HepG2 (cell line): ENCODE measurements at regions of chr1 and their contacts with region 1.

Region 1: GRCh38 chr1:228734881-228735801 is at the start of gene RHOU:
- DNase-seq: peak; percentile 20
- ATAC-seq: peak; percentile 90
- H3K4me3 ChIP-seq: peak within 1 kb of the TSS; percentile 85 to 94 (median 86)
- H3K27ac ChIP-seq: peak within 1 kb of the TSS; percentile 61
- H3K4me1 ChIP-seq: peaks cover 39% of the 10 kb centered on the region
- H3K27me3 ChIP-seq: peaks cover 2 to 12% of the 10 kb centered on the region in 2 experiments; a peak in 4 of 5 replicates
- CTCF ChIP-seq: peak; percentile 67
- EP300 ChIP-seq: 0 out of 4 replicates have a peak, but pooled peaks of 1 of the 2 experiments have one; percentile 16
- POLR2A ChIP-seq: peak; percentile 59 to 65
- RAD21 ChIP-seq: peak; percentile 95
- total RNA-seq, gene RHOU: 18.5 and 23.6 TPM in 2 replicates

Region 2: DNA sequence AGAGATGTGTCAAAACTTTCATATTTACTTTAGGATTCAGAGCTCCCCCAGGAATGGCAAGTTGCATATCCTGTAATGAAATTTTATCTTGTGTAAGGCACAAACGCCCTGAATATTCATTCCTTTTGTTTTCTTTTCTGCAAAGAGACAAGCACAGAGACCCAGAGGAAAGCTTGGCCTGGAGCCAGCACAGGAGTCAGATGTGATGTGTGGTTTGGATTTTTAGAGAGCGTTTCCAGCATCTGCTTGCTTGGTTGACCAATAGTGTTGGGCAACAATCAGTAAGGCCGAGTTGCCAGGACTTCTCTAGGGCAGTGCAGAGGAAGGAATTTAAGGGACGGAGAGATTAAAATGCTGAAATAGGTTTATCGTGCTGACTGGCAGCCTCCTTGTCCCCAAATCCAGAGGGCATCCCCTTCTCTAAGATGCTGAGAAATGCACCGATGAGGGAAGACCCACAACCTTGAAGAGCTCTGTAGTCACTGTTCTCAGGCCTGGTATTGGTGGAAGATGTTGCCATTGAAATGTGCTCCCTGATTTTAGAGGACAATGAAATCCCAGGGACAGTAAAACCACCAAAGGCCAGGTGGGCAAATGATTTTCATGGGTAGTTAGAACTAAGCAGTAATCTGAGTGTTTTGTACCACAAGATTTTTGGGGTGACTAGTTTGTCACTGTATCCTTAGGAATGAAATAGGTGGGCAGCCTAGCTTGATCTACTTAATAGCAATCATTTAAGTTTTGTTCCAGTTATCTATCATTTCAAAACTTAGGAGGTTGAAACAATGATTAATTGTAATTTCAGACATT is 37.7 kb before region 1 on chr1:
- CTCF ChIA-PET with region 1: no interaction called
- POLR2A ChIA-PET with region 1: no interaction called
- in situ Hi-C with region 1: no loop called
- intact Hi-C with region 1: loop called (anchors 5 kb)
- DNase-seq: peak; percentile 60
- ATAC-seq: peak; percentile 49; the same call in 2 of the 3 replicates
- H3K4me3 ChIP-seq: no peak overlapping the region
- H3K27ac ChIP-seq: no peak overlapping the region
- H3K4me1 ChIP-seq: peaks cover 24% of the 10 kb centered on the region; the same call in 1 of the 2 replicates
- H3K27me3 ChIP-seq: no peaks in the 10 kb centered on the region; a peak in 1 of 5 replicates
- CTCF ChIP-seq: no peak
- EP300 ChIP-seq: no peak
- POLR2A ChIP-seq: no peak
- RAD21 ChIP-seq: no peak

Region 3: DNA sequence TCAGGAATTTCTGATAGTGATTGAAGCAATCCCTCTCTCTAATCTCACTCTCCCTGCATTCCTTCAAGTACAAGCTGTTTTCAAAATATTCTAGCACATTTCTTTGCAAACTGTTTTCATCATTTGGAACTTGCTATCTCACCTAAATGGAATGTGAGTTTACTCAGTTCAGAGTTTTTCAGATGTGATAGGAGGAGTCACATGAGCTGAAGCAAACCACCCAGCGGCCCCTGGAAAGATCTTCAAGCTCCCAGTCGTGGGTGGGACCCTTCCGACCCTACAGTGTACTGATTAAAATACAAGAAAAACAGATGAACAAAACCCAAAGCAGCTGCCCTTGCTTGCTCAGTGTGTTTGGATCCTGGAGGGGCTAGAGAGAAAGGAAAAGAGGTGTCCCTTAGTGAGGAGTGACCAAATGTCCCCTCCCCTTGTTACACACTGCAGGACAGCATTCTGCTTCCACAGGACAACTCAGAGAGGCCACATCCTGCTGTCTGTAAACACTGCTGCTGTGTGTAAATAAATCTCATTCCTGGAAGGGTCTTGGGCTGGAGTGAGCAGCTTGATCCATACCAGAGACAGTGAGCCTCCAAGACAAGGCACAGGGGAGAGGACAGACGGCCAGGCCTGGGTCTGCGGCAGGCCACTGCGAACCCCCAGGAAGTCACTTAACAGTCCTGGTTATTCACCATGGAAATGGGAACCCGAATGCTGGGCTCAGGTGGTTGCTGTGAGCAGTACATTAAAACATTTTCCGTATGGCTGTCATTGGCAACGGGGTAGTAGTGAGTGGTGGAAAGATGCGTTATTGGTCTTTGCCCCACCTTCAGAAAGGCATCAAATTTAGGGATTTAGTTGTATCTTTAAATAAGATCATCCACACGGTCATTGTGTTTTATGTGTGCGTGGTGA is 229.3 kb after region 1 on chr1:
- CTCF ChIA-PET with region 1: no interaction called
- POLR2A ChIA-PET with region 1: interaction called, 9 read pairs
- in situ Hi-C with region 1: no loop called
- intact Hi-C with region 1: loop called (anchors 10 kb)
- DNase-seq: peak; percentile 88
- ATAC-seq: peak; percentile 97
- H3K4me3 ChIP-seq: peak overlapping the region; percentile 9 to 39 (median 36); a peak in 5 of 6 replicates
- H3K27ac ChIP-seq: peak overlapping the region; percentile 64
- H3K4me1 ChIP-seq: peaks cover 44% of the 10 kb centered on the region
- H3K27me3 ChIP-seq: no peaks in the 10 kb centered on the region
- CTCF ChIP-seq: no peak
- EP300 ChIP-seq: peak in 1 of 2 experiments; percentile 66; a peak in 1 of 4 replicates
- POLR2A ChIP-seq: peak in 1 of 2 experiments; percentile 29; a peak in 1 of 4 replicates
- RAD21 ChIP-seq: no peak

Region 4: GRCh38 chr1:229156872-229157271 is 421.7 kb after region 1 on chr1:
- CTCF ChIA-PET with region 1: interaction called, 3 read pairs
- POLR2A ChIA-PET with region 1: no interaction called
- in situ Hi-C with region 1: loop called (anchors 5 kb)
- intact Hi-C with region 1: loop called (anchors 2 kb)
- DNase-seq: peak; percentile 58
- ATAC-seq: peak; percentile 78
- H3K4me3 ChIP-seq: no peak overlapping the region
- H3K27ac ChIP-seq: no peak overlapping the region
- H3K4me1 ChIP-seq: peaks cover 50% of the 10 kb centered on the region
- H3K27me3 ChIP-seq: no peaks in the 10 kb centered on the region
- CTCF ChIP-seq: peak; percentile 72
- EP300 ChIP-seq: no peak
- POLR2A ChIP-seq: no peak
- RAD21 ChIP-seq: peak; percentile 90